ENCODE measurements at regions of chr11 and their contacts with region 1.

Region 1: DNA sequence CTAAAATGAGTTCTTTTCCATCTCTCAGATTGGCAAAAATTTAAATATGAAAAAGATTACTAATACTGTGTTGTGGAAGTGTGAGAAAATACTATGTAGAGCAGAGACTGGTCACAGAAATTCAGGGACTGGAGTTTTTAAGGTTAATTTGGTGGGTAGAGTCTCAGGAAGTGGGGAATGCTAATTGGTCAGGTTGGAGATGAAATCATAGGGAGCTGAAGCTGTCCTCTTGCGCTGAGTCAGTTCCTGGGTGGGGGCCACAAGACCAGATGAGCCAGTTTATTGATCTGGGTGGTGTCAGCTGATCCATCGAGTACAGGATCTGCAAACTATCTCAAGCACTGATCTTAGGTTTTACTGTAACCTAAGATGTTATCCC is 29.4 kb upstream of the TMEM86A start:
- DNase-seq: peak; percentile 86
- H3K4me3 Mint-ChIP-seq: peak overlapping the region; percentile 32
- H3K27ac Mint-ChIP-seq: peak overlapping the region; percentile 81
- H3K4me1 Mint-ChIP-seq: peaks cover 51% of the 10 kb centered on the region
- H3K27me3 Mint-ChIP-seq: no peaks in the 10 kb centered on the region
- CTCF ChIP-seq: no peak

Region 2: GRCh38 chr11:18698341-18699268 is 29.4 kb after region 1 on chr11 and contains the start of gene TMEM86A:
- CTCF ChIA-PET with region 1: interaction called, 3 read pairs
- intact Hi-C with region 1: loop called (anchors 2 kb)
- DNase-seq: peak; percentile 94
- H3K4me3 Mint-ChIP-seq: peak within 1 kb of the TSS; percentile 72
- H3K27ac Mint-ChIP-seq: peak within 1 kb of the TSS; percentile 85
- H3K4me1 Mint-ChIP-seq: peaks cover 35% of the 10 kb centered on the region
- H3K27me3 Mint-ChIP-seq: peaks cover 8% of the 10 kb centered on the region
- CTCF ChIP-seq: no peak
- total RNA-seq, gene TMEM86A: 8.8 and 11.9 TPM in 2 replicates